CD4-positive, alpha-beta T cell (primary cell): ENCODE measurements at regions of chr12 and their contacts with region 1.

Region 1: GRCh38 chr12:81644503-81644902 is 114.6 kb downstream of the PPFIA2 start:
- DNase-seq: peak in 3 of 14 experiments; percentile 48 to 64 (median 60)
- ATAC-seq: peak; percentile 61
- H3K4me3 ChIP-seq: no peak overlapping the region
- H3K4me3 Mint-ChIP-seq: no peak overlapping the region
- H3K27ac ChIP-seq: no peak overlapping the region
- H3K27ac Mint-ChIP-seq: no peak overlapping the region
- H3K4me1 ChIP-seq: no peaks in the 10 kb centered on the region
- H3K4me1 Mint-ChIP-seq: no peaks in the 10 kb centered on the region
- H3K27me3 ChIP-seq: no peaks in the 10 kb centered on the region
- H3K27me3 Mint-ChIP-seq: no peaks in the 10 kb centered on the region
- CTCF ChIP-seq: peak; percentile 66

Region 2: DNA sequence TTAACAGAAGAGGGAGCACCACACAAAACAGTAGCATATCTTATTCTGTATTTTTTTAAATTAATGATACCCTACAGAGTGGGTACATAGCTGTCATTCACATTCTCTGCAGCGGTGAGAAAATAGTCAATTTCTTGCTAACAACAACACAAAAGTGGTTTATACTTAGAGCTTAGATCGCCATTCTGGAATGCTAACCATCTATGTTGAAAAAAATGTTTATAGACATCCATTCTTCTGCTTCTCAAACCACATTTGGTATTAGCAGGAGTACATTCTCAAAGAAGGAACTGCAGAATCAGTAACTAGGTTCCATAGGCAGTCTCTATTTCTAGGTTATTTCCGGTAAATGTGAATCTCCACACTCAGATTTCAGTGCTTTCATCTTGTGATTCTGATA is 71.3 kb before region 1 on chr12:
- CTCF ChIA-PET with region 1: no interaction called
- POLR2A ChIA-PET with region 1: no interaction called
- intact Hi-C with region 1: no loop called
- DNase-seq: no peak
- ATAC-seq: no peak
- H3K4me3 ChIP-seq: no peak overlapping the region
- H3K4me3 Mint-ChIP-seq: no peak overlapping the region
- H3K27ac ChIP-seq: no peak overlapping the region
- H3K27ac Mint-ChIP-seq: no peak overlapping the region
- H3K4me1 ChIP-seq: no peaks in the 10 kb centered on the region
- H3K4me1 Mint-ChIP-seq: no peaks in the 10 kb centered on the region
- H3K27me3 ChIP-seq: no peaks in the 10 kb centered on the region
- H3K27me3 Mint-ChIP-seq: no peaks in the 10 kb centered on the region
- CTCF ChIP-seq: no peak

Region 3: DNA sequence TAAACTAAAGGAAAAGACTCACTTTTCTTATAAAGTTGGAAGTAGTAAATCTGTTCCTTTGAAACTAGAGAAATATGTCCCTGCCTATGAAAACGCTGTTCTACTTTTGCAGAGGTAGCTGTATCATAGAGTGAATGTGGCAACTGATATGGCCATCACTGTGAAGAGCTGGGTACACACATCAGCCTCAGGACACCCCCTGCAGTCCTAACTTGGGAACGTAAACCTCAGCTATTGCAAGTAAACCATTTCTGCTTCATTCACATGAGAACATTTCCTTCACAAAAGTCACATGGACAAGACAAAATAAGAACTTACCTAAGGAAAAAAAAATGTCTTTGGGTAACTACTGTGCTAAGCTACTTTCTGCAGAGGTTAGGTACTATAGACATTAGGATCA is 348.0 kb after region 1 on chr12:
- CTCF ChIA-PET with region 1: interaction called, 3 read pairs
- POLR2A ChIA-PET with region 1: interaction called, 6 read pairs
- intact Hi-C with region 1: loop called (anchors 1 to 2 kb)
- DNase-seq: peak in 13 of 14 experiments; percentile 1 to 69 (median 16)
- ATAC-seq: peak; percentile 68
- H3K4me3 ChIP-seq: no peak overlapping the region
- H3K4me3 Mint-ChIP-seq: no peak overlapping the region
- H3K27ac ChIP-seq: no peak overlapping the region
- H3K27ac Mint-ChIP-seq: no peak overlapping the region
- H3K4me1 ChIP-seq: no peaks in the 10 kb centered on the region
- H3K4me1 Mint-ChIP-seq: peaks cover 5% of the 10 kb centered on the region
- H3K27me3 ChIP-seq: no peaks in the 10 kb centered on the region
- H3K27me3 Mint-ChIP-seq: no peaks in the 10 kb centered on the region
- CTCF ChIP-seq: peak; percentile 59

Region 4: GRCh38 chr12:82326905-82327503 is 682.5 kb after region 1 on chr12:
- CTCF ChIA-PET with region 1: no interaction called
- POLR2A ChIA-PET with region 1: no interaction called
- intact Hi-C with region 1: loop called (anchors 1 to 2 kb)
- DNase-seq: peak in 3 of 14 experiments; percentile 3 to 25 (median 17)
- ATAC-seq: no peak
- H3K4me3 ChIP-seq: no peak overlapping the region
- H3K4me3 Mint-ChIP-seq: no peak overlapping the region
- H3K27ac ChIP-seq: no peak overlapping the region
- H3K27ac Mint-ChIP-seq: no peak overlapping the region
- H3K4me1 ChIP-seq: no peaks in the 10 kb centered on the region
- H3K4me1 Mint-ChIP-seq: no peaks in the 10 kb centered on the region
- H3K27me3 ChIP-seq: no peaks in the 10 kb centered on the region
- H3K27me3 Mint-ChIP-seq: peaks cover 5% of the 10 kb centered on the region
- CTCF ChIP-seq: peak; percentile 60

Region 5: GRCh38 chr12:82358200-82359114 is 714.0 kb after region 1 on chr12 and contains the starts of genes CCDC59 and METTL25:
- CTCF ChIA-PET with region 1: no interaction called
- POLR2A ChIA-PET with region 1: interaction called, 4 read pairs
- intact Hi-C with region 1: loop called in 1 of 2 experiments (anchors 10 kb)
- DNase-seq: peak; percentile 94 to 99 (median 98)
- ATAC-seq: peak; percentile 87
- H3K4me3 ChIP-seq: peak within 1 kb of the TSS; percentile 79
- H3K4me3 Mint-ChIP-seq: peak within 1 kb of the TSS; percentile 100
- H3K27ac ChIP-seq: peak within 1 kb of the TSS; percentile 89 to 95
- H3K27ac Mint-ChIP-seq: peak within 1 kb of the TSS; percentile 99
- H3K4me1 ChIP-seq: peaks cover 10% of the 10 kb centered on the region
- H3K4me1 Mint-ChIP-seq: peaks cover 68% of the 10 kb centered on the region
- H3K27me3 ChIP-seq: no peaks in the 10 kb centered on the region
- H3K27me3 Mint-ChIP-seq: no peaks in the 10 kb centered on the region
- CTCF ChIP-seq: peak; percentile 100
- total RNA-seq, gene CCDC59: 186 to 204 TPM
- total RNA-seq, gene METTL25: 12.4 to 12.6 TPM